PC-3 (cell line): ENCODE measurements at regions of chr11 and their contacts with region 1.

Region 1: GRCh38 chr11:126007238-126007637 is 55.4 kb downstream of the CDON start:
- DNase-seq: peak; percentile 67
- ATAC-seq: peak; percentile 99
- H3K4me3 ChIP-seq: no peak overlapping the region
- H3K27ac ChIP-seq: no peak overlapping the region
- H3K4me1 ChIP-seq: peaks cover 11% of the 10 kb centered on the region
- H3K27me3 ChIP-seq: no peaks in the 10 kb centered on the region
- CTCF ChIP-seq: no peak

Region 2: GRCh38 chr11:125990244-125990643 is 17.0 kb before region 1 on chr11:
- CTCF ChIA-PET with region 1: no interaction called
- POLR2A ChIA-PET with region 1: no interaction called
- intact Hi-C with region 1: no loop called
- DNase-seq: peak; percentile 20
- ATAC-seq: no peak
- H3K4me3 ChIP-seq: no peak overlapping the region
- H3K27ac ChIP-seq: no peak overlapping the region
- H3K4me1 ChIP-seq: no peaks in the 10 kb centered on the region
- H3K27me3 ChIP-seq: no peaks in the 10 kb centered on the region
- CTCF ChIP-seq: no peak

Region 3: GRCh38 chr11:126053415-126054286 is 46.4 kb after region 1 on chr11:
- CTCF ChIA-PET with region 1: no interaction called
- POLR2A ChIA-PET with region 1: no interaction called
- intact Hi-C with region 1: loop called (anchors 5 kb)
- DNase-seq: peak; percentile 13
- ATAC-seq: peak; percentile 88
- H3K4me3 ChIP-seq: no peak overlapping the region
- H3K27ac ChIP-seq: no peak overlapping the region
- H3K4me1 ChIP-seq: no peaks in the 10 kb centered on the region
- H3K27me3 ChIP-seq: no peaks in the 10 kb centered on the region
- CTCF ChIP-seq: no peak

Region 4: GRCh38 chr11:126080161-126080941 is 73.1 kb after region 1 on chr11:
- CTCF ChIA-PET with region 1: no interaction called
- POLR2A ChIA-PET with region 1: no interaction called
- intact Hi-C with region 1: no loop called
- DNase-seq: peak; percentile 89
- ATAC-seq: peak; percentile 86
- H3K4me3 ChIP-seq: peak overlapping the region; percentile 42; the same call in 1 of the 2 replicates
- H3K27ac ChIP-seq: peak overlapping the region; percentile 81
- H3K4me1 ChIP-seq: peaks cover 23% of the 10 kb centered on the region
- H3K27me3 ChIP-seq: no peaks in the 10 kb centered on the region
- CTCF ChIP-seq: no peak